CD14-positive monocyte (primary cell): ENCODE measurements at regions of chr10 and their contacts with region 1.

Region 1: DNA sequence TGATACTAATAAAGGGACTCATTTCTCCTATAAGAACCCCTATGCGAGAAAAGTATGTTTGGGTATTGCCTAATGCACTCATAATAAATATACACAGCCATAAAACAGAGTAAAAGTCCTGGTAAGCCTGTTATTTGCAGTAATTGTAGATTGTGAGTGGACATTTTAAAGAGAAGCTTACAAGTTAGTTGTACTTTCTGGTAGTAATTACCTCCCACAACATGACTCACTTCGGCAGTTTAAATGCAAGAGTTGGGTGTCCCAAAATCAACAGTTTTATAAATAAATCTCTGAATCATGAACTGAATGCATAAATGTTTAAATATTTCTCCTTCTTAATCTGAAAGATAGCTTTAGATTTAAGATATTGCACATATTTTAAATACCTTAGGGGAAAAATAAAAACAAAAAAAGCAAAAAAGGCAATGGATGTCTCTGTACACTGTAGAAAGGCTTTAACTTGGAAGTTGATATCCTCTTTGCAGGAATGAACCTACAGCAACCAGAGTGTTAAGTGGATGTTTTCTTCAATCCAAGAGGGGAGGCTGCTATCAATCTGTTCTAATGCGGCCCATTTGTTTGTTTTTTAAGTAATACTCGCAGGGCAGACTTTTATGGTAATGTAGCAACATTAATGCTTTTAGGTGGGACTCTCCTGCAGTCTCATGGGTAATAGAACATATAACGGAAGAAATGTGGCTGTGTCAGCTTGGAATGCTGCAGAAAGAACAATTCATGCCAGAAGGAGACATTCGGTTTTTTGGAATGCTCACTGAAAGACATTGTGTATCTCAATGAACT is 57.3 kb upstream of the ZEB1 start:
- DNase-seq: no peak
- H3K4me3 ChIP-seq: no peak overlapping the region
- H3K4me3 Mint-ChIP-seq: no peak overlapping the region
- H3K27ac ChIP-seq: no peak overlapping the region
- H3K27ac Mint-ChIP-seq: no peak overlapping the region
- H3K4me1 ChIP-seq: no peaks in the 10 kb centered on the region
- H3K4me1 Mint-ChIP-seq: no peaks in the 10 kb centered on the region
- H3K27me3 ChIP-seq: no peaks in the 10 kb centered on the region
- H3K27me3 Mint-ChIP-seq: peaks cover 0 to 1% (median 0%) of the 10 kb centered on the region in 3 donors
- CTCF ChIP-seq: no peak

Region 2: DNA sequence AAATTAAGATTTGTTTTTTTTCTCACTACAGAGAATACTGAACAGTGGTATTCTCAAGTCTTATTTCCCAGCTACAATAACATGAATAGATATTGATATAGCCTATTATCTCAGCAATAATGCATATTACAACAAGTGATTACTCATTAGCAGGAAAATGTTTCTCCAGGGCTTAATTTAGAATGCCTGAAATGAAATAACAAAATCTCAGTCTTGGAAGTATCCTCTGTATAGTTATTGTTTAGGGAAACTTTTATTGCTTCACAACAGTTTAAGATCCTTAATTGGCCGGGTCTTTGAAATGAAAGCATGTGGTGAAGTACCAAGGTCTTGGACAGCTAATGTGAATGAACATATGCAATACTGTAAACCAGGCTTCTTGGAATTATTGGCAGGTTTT is 21.8 kb before region 1 on chr10:
- intact Hi-C with region 1: loop called in 1 of 2 experiments (anchors 2 kb)
- DNase-seq: no peak
- H3K4me3 ChIP-seq: no peak overlapping the region
- H3K4me3 Mint-ChIP-seq: no peak overlapping the region
- H3K27ac ChIP-seq: no peak overlapping the region
- H3K27ac Mint-ChIP-seq: no peak overlapping the region
- H3K4me1 ChIP-seq: peaks cover 7% of the 10 kb centered on the region in 2 donors
- H3K4me1 Mint-ChIP-seq: peaks cover 11% of the 10 kb centered on the region
- H3K27me3 ChIP-seq: no peaks in the 10 kb centered on the region
- H3K27me3 Mint-ChIP-seq: peaks cover 0 to 1% (median 0%) of the 10 kb centered on the region in 3 donors
- CTCF ChIP-seq: no peak

Region 3: DNA sequence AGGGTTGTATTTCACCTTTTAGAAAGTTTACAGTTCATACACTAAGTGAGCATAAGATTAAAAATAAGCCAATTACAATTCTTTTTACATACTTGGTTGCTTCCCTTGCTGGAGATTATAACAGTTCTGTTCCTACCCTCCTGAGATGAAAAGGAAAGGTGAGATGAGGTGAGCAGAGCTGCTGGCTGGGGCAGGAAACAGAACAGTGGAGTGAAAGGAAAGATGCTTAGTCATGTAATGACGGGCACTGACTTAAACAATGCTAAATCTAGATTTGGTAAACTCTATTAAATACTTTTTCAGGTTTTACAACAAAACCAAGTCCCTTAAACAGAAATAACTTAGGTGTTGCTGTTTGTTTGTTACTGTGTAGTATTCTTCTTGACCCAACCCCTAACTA is 37.4 kb after region 1 on chr10:
- intact Hi-C with region 1: no loop called
- DNase-seq: no peak
- H3K4me3 ChIP-seq: no peak overlapping the region
- H3K4me3 Mint-ChIP-seq: no peak overlapping the region
- H3K27ac ChIP-seq: no peak overlapping the region
- H3K27ac Mint-ChIP-seq: no peak overlapping the region
- H3K4me1 ChIP-seq: no peaks in the 10 kb centered on the region
- H3K4me1 Mint-ChIP-seq: peaks cover 4% of the 10 kb centered on the region
- H3K27me3 ChIP-seq: no peaks in the 10 kb centered on the region
- H3K27me3 Mint-ChIP-seq: peaks cover 0 to 2% (median 1%) of the 10 kb centered on the region in 3 donors
- CTCF ChIP-seq: no peak